ENCODE measurements at regions of chr12 and their contacts with region 1.

Region 1: DNA sequence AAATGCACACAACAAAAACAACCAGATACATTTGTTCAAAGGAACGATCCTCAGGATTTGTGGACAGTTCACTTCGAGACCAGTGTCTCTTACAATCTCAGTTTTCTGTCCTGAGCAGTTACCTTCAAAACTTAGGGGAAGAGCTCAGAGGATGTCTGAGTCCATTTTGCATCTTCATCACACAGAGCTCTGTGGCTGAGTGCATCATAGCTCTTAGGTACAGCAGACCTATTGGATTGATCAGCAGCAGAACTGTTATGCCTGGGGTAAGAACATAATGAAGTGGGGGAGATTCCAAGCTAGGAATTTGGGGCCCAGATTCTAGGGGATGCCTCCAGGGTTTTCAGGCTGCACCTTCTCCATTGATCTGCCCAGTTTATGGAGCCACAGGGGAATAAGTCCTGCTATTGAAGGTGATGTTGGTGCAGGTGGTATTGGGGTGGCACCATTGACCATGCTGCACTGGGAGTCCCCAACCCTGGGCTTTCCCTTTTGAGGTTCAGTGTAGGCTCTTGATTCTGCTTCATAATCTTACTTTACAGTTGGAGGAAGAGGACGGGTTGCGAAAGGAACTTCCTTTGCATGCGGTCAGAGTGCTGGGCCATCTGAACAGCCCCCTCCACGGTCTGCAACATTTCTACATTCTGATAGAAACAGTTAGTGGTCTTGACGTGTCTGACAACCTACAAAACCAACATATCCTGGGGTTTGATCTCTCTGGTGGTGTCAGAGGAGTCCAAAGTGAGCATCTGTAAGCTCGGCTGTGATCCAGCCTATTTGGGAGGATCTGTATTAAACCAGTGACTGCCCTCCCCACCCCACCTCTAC is 112.8 kb downstream of the CHST11 start:
- DNase-seq: peak; percentile 92 to 99 (median 99)
- H3K4me3 ChIP-seq: peak overlapping the region in 4 of 7 experiments; percentile 42 to 62 (median 56)
- H3K27ac ChIP-seq: peak overlapping the region; percentile 75 to 88
- H3K4me1 ChIP-seq: peaks cover 21 to 64% (median 56%) of the 10 kb centered on the region in 4 experiments
- H3K27me3 ChIP-seq: no peaks in the 10 kb centered on the region

Region 2: DNA sequence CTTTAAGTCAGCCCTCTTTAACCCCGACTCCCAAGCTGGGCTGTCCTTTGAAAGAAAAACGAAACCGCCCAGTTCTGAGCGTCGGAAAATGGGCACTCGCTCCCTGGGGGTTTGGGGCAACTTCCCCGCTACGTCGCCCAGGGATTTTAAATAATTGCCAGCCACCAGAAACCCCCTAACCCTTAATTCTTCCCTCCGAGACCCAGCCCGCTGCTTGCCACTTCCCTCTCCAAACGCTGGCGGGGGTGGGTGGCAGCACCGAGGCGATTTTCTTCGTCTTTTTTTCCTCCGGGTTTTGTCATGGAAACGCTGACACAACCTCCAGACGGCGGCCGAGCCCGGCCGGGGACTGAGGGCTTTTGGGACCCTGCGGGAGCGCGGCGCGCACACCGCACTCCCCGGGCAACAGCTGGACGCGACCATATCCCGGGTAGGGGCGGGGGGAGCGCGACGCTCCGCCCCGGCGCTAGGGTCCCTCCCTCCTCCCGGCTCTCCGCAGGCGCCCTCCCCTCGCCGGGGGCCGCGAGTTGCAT is 113.1 kb before region 1 on chr12 and contains the start of gene CHST11:
- CTCF ChIA-PET with region 1: interaction called, 18 read pairs
- POLR2A ChIA-PET with region 1: interaction called, 3 read pairs
- DNase-seq: peak; percentile 95 to 98 (median 98)
- H3K4me3 ChIP-seq: peak within 1 kb of the TSS; percentile 75 to 100 (median 99)
- H3K27ac ChIP-seq: peak within 1 kb of the TSS; percentile 81 to 91
- H3K4me1 ChIP-seq: peaks cover 20 to 37% (median 30%) of the 10 kb centered on the region in 4 experiments
- H3K27me3 ChIP-seq: no peaks in the 10 kb centered on the region

Region 3: GRCh38 chr12:104513681-104514080 is 55.9 kb before region 1 on chr12:
- CTCF ChIA-PET with region 1: interaction called, 15 read pairs
- POLR2A ChIA-PET with region 1: interaction called, 5 read pairs
- DNase-seq: no peak
- H3K4me3 ChIP-seq: no peak overlapping the region
- H3K27ac ChIP-seq: no peak overlapping the region
- H3K4me1 ChIP-seq: peaks cover 25 to 87% (median 70%) of the 10 kb centered on the region in 4 experiments
- H3K27me3 ChIP-seq: no peaks in the 10 kb centered on the region

Region 4: DNA sequence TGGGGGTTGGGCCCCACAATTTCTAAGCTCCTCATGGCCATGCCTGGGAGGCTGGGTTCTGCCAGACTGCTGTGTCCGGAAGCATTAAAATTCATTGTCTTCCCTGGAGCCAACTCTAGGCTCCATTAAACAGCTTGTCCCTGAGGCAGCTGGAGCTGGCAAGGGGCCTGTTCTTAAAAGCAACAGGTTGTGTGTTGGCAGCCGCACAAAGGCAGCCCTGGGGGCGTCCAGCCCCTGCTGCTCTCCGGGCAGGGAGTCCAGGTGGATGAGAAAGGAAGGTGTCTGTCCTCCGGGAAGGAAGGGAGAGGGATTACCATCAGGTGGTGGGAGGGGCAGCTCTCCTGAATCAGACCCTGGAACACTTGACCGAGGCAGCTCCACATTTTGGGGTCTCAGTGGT is 13.9 kb before region 1 on chr12:
- CTCF ChIA-PET with region 1: interaction called, 16 read pairs
- POLR2A ChIA-PET with region 1: interaction called, 5 read pairs
- DNase-seq: no peak
- H3K4me3 ChIP-seq: no peak overlapping the region
- H3K27ac ChIP-seq: no peak overlapping the region
- H3K4me1 ChIP-seq: peaks cover 0 to 24% (median 15%) of the 10 kb centered on the region in 4 experiments
- H3K27me3 ChIP-seq: no peaks in the 10 kb centered on the region

Region 5: GRCh38 chr12:104582739-104583138 is 13.2 kb after region 1 on chr12:
- CTCF ChIA-PET with region 1: interaction called, 13 read pairs
- POLR2A ChIA-PET with region 1: no interaction called
- DNase-seq: peak in 2 of 3 donors; percentile 44 to 58
- H3K4me3 ChIP-seq: no peak overlapping the region
- H3K27ac ChIP-seq: no peak overlapping the region
- H3K4me1 ChIP-seq: peaks cover 8 to 65% (median 48%) of the 10 kb centered on the region in 4 experiments
- H3K27me3 ChIP-seq: no peaks in the 10 kb centered on the region

Region 6: GRCh38 chr12:104604070-104604994 is 34.8 kb after region 1 on chr12:
- CTCF ChIA-PET with region 1: interaction called, 20 read pairs
- POLR2A ChIA-PET with region 1: interaction called, 9 read pairs
- DNase-seq: peak; percentile 88 to 97 (median 96)
- H3K4me3 ChIP-seq: peak overlapping the region in 3 of 7 experiments; percentile 14 to 23 (median 19)
- H3K27ac ChIP-seq: peak overlapping the region; percentile 75 to 92
- H3K4me1 ChIP-seq: peaks cover 22 to 82% (median 73%) of the 10 kb centered on the region in 4 experiments
- H3K27me3 ChIP-seq: no peaks in the 10 kb centered on the region